IMR-90 (cell line): ENCODE measurements at regions of chr21 and their contacts with region 1.

Region 1: DNA sequence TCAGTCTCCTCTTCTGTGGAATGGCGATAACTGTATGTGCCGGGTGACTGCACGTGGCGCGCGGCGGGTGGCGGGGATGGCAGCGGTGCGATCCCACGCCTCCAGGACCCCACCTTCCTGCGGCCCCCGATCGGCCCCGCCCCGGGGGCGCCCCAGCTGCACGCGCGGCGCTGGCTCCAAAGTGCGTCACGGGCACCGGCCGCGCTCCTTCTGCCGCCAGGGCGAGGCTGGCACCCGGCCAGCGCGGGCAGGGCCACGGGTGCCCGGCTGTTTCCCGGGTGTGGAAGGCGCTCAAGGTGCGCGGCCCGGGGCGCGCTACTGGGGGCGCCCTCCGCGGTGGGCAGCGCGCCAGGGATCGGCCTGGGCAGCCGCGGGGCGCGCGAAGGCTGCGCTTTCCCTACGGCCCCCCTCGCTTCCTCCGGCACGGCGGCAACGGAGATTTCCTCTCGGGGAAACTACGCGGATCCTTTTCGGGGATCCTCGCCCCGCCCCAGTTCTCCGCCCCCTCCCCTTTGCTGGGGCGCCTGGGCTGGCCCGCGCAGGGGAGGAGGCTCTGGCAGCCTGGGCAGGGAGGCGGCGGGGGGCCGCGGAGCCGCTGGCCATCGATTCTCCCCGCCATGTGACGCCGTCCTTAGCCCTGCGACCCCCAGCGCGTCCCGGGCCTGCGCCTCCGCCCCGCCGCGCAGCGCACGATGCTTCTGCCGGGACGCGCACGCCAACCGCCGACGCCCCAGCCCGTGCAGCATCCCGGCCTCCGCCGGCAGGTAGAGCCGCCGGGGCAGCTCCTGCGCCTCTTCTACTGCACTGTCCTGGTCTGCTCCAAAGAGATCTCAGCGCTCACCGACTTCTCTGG is at the start of gene EVA1C:
- DNase-seq: peak; percentile 30
- ATAC-seq: peak; percentile 53
- H3K4me3 ChIP-seq: peak within 1 kb of the TSS; percentile 64
- H3K27ac ChIP-seq: peak within 1 kb of the TSS; percentile 66
- H3K4me1 ChIP-seq: peaks cover 10% of the 10 kb centered on the region
- H3K27me3 ChIP-seq: peaks cover 6% of the 10 kb centered on the region; the same call in 1 of the 2 replicates
- CTCF ChIP-seq: 0 out of 2 replicates have a peak, but pooled peaks have one; percentile 9
- POLR2A ChIP-seq: no peak; the same call in 1 of the 2 replicates
- RAD21 ChIP-seq: no peak
- total RNA-seq, gene EVA1C: 0.72 and 0.83 TPM in 2 replicates

Region 2: DNA sequence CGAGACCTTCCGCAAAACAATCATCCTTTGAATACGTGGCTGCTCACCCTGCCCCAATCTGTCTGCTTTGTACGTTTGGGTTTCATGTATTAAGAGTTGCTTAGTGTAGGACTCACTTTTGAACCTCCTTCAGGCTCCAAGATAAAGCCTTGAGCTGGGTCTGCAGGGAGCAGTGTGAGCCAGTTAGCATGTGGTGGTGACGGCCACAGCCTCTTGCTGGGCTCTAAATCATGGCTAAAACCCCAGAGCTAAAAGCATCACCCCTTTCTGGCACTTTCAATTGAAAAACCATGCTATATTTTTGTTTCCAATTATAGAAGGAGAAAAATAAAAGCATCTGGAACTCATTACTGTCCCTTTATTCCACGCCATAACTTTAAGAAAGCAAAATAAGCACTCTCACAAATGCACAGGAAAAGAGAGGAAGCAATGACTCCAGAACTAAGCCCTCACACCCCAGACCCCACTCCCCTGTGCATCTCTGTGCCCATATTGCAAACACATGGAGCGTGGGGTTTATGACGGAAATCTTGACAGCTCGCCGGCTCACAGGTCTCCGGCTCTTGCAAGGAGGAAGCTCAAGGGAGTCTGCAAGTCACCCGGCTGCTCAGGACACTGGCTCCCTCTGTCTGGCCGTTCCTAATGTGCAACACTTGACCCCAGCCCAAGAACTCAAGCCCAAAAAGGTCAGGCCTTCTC is 269.0 kb before region 1 on chr21:
- CTCF ChIA-PET with region 1: no interaction called
- POLR2A ChIA-PET with region 1: no interaction called
- dilution Hi-C with region 1: no loop called
- in situ Hi-C with region 1: no loop called
- intact Hi-C with region 1: no loop called
- DNase-seq: peak; percentile 3
- ATAC-seq: no peak
- H3K4me3 ChIP-seq: no peak overlapping the region
- H3K27ac ChIP-seq: no peak overlapping the region
- H3K4me1 ChIP-seq: no peaks in the 10 kb centered on the region
- H3K27me3 ChIP-seq: peaks cover 5% of the 10 kb centered on the region; the same call in 1 of the 2 replicates
- CTCF ChIP-seq: no peak
- POLR2A ChIP-seq: no peak
- RAD21 ChIP-seq: no peak

Region 3: GRCh38 chr21:32494934-32495703 is 82.7 kb after region 1 on chr21:
- CTCF ChIA-PET with region 1: no interaction called
- POLR2A ChIA-PET with region 1: no interaction called
- dilution Hi-C with region 1: no loop called
- in situ Hi-C with region 1: no loop called
- intact Hi-C with region 1: loop called (anchors 10 kb)
- DNase-seq: peak; percentile 79
- ATAC-seq: peak; percentile 80
- H3K4me3 ChIP-seq: no peak overlapping the region
- H3K27ac ChIP-seq: peak overlapping the region; percentile 4; the same call in 1 of the 2 replicates
- H3K4me1 ChIP-seq: peaks cover 5% of the 10 kb centered on the region
- H3K27me3 ChIP-seq: no peaks in the 10 kb centered on the region
- CTCF ChIP-seq: no peak
- POLR2A ChIP-seq: no peak
- RAD21 ChIP-seq: no peak

Region 4: DNA sequence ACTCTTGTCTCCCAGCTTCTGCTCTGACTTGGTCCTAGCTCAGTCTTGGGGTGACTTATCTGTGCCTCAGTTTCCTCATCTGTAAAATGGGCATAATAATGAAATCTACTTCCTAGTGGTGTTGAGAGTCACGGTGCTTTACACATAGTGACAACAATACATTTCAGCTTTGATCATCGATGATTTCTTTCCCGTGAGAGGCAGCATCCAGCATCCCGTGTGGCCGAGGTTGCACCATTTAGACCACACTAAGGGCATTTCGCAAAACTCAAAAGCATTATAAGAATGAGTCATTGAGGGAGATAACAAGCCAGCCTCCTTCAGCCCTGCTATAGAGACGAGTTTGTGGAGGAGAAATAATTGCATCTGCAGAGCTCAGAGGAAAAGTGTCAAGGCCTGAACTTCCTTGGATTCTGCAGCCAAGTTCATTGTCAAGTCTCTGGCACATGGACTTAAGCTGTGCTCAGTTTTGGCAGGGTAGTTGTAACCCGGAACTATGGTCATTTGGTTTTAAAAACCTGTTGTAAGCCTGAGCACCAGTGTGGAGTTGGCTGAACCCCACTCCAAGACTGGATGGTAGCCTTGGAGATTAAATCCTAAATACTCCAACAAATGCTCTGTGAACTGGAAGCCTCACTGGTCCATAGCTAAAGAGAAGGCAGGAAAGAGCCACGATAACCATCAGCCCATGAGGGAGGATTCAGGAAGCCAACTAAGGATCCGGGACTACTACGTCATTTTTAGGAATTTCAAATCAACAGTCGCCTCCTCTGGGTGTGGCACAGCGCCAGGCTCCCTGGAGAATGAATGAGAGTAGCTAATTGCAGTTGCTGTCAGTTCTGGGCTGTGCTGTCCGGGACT is 108.7 kb after region 1 on chr21:
- CTCF ChIA-PET with region 1: interaction called, 3 read pairs
- POLR2A ChIA-PET with region 1: no interaction called
- dilution Hi-C with region 1: no loop called
- in situ Hi-C with region 1: no loop called
- intact Hi-C with region 1: loop called (anchors 5 kb)
- DNase-seq: peak; percentile 97
- ATAC-seq: peak; percentile 71
- H3K4me3 ChIP-seq: no peak overlapping the region
- H3K27ac ChIP-seq: peak overlapping the region; percentile 73
- H3K4me1 ChIP-seq: peaks cover 21% of the 10 kb centered on the region
- H3K27me3 ChIP-seq: no peaks in the 10 kb centered on the region
- CTCF ChIP-seq: no peak
- POLR2A ChIP-seq: peak; percentile 61
- RAD21 ChIP-seq: no peak

Region 5: DNA sequence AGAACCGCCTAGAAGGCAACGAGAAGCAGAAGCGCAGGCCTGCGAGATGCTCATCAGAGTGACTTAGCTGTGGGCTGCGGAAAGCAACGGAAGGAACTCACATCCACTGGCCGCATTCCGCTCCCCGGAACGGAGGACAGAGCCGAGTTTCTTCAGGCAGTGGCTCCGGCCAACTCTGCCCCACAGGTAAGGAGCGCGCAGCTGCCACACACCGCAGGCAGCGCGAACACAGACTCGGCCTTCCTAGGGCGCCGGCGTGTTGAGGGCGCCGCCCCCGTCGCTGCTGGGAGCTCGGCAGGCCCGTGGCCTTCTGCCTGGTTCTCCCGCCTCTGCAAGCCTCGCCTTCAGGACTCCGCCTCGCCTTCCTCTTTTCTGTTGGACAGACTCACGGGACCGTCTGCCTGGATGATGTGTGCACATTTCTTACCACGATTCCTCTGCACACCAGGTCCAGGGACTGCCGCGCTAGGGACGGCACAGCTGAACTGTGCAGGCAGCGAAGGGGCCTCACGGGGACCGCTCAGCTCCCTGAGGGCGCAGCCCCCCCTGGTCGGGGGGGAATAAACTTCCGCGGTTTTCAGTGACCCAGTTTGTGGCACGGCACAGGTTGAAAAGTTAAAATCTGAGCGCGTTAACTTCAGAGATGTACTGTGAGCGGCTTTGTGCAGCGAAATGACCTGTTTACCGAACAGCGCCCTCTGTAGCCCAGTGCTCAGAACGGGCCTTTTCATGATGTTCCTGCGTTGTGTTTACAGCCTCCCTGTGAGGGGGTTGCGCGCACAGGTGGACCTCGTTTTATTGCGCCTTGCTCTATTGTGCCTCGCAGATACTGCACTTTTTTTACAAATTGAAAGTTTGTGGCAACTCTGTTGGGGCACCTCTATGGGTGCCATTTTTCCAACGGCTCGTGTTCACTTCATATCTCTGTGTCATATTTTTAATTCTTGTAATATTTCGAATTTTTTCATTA is 157.2 kb after region 1 on chr21:
- CTCF ChIA-PET with region 1: interaction called, 3 read pairs
- POLR2A ChIA-PET with region 1: no interaction called
- dilution Hi-C with region 1: no loop called
- in situ Hi-C with region 1: loop called (anchors 5 kb)
- intact Hi-C with region 1: loop called (anchors 1 kb)
- DNase-seq: peak; percentile 79
- ATAC-seq: peak; percentile 93
- H3K4me3 ChIP-seq: peak overlapping the region; percentile 47
- H3K27ac ChIP-seq: peak overlapping the region; percentile 58
- H3K4me1 ChIP-seq: no peaks in the 10 kb centered on the region
- H3K27me3 ChIP-seq: peaks cover 10% of the 10 kb centered on the region
- CTCF ChIP-seq: peak; percentile 82
- POLR2A ChIP-seq: no peak
- RAD21 ChIP-seq: peak; percentile 75

Region 6: DNA sequence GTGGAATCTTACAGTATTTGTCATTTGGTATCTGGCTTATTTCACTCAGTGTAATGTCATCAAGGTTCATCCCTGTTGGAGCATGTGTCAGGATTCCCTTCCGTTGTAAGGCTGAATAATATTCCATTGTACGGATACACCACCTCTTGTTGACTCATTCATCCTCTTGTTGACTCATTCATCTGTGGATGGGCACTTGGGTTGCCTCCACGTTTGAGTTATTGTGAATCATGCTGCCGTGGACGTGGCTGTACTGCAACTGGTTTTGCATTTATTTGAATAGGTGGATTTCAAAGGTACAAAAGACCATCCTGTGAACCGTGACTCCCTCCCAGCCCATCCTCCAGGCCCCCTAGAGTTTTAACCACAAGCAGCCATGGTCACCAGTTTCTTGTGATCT is 184.8 kb after region 1 on chr21:
- CTCF ChIA-PET with region 1: interaction called, 9 read pairs
- POLR2A ChIA-PET with region 1: interaction called, 3 read pairs
- dilution Hi-C with region 1: no loop called
- in situ Hi-C with region 1: no loop called
- intact Hi-C with region 1: loop called (anchors 1 kb)
- DNase-seq: peak; percentile 95
- ATAC-seq: peak; percentile 52
- H3K4me3 ChIP-seq: no peak overlapping the region
- H3K27ac ChIP-seq: no peak overlapping the region
- H3K4me1 ChIP-seq: no peaks in the 10 kb centered on the region
- H3K27me3 ChIP-seq: no peaks in the 10 kb centered on the region
- CTCF ChIP-seq: no peak
- POLR2A ChIP-seq: no peak
- RAD21 ChIP-seq: 0 out of 2 replicates have a peak, but pooled peaks have one; percentile 6